ENCODE measurements at regions of chr16 and their contacts with region 1.

Region 1: GRCh38 chr16:57648590-57649442 is 19.3 kb upstream of the ADGRG3 start:
- DNase-seq: peak; percentile 75 to 88 (median 79)
- H3K4me3 ChIP-seq: no peak overlapping the region
- H3K4me3 Mint-ChIP-seq: peak overlapping the region; percentile 41 to 88 (median 75)
- H3K27ac ChIP-seq: no peak overlapping the region
- H3K27ac Mint-ChIP-seq: peak overlapping the region; percentile 63 to 96 (median 83)
- H3K4me1 ChIP-seq: peaks cover 34% of the 10 kb centered on the region
- H3K4me1 Mint-ChIP-seq: peaks cover 45 to 54% (median 46%) of the 10 kb centered on the region in 3 donors
- H3K27me3 ChIP-seq: no peaks in the 10 kb centered on the region
- H3K27me3 Mint-ChIP-seq: peaks cover 0 to 2% of the 10 kb centered on the region in 2 donors

Region 2: GRCh38 chr16:57555831-57556230 is 93.0 kb before region 1 on chr16:
- CTCF ChIA-PET with region 1: no interaction called
- POLR2A ChIA-PET with region 1: no interaction called
- DNase-seq: no peak
- H3K4me3 ChIP-seq: no peak overlapping the region
- H3K4me3 Mint-ChIP-seq: peak overlapping the region in 1 of 7 donors; percentile 1
- H3K27ac ChIP-seq: no peak overlapping the region
- H3K27ac Mint-ChIP-seq: peak overlapping the region in 2 of 8 donors; percentile 33 to 39
- H3K4me1 ChIP-seq: no peaks in the 10 kb centered on the region
- H3K4me1 Mint-ChIP-seq: peaks cover 40 to 55% (median 54%) of the 10 kb centered on the region in 3 donors
- H3K27me3 ChIP-seq: no peaks in the 10 kb centered on the region
- H3K27me3 Mint-ChIP-seq: peaks cover 0 to 2% of the 10 kb centered on the region in 2 donors

Region 3: GRCh38 chr16:57591086-57591869 is 57.5 kb before region 1 on chr16:
- CTCF ChIA-PET with region 1: interaction called, 99 read pairs
- POLR2A ChIA-PET with region 1: interaction called, 3 read pairs
- DNase-seq: peak in 4 of 5 donors; percentile 50 to 80 (median 53)
- H3K4me3 ChIP-seq: no peak overlapping the region
- H3K4me3 Mint-ChIP-seq: peak overlapping the region in 6 of 7 donors; percentile 73 to 87 (median 79)
- H3K27ac ChIP-seq: no peak overlapping the region
- H3K27ac Mint-ChIP-seq: peak overlapping the region; percentile 75 to 97 (median 94)
- H3K4me1 ChIP-seq: peaks cover 37% of the 10 kb centered on the region
- H3K4me1 Mint-ChIP-seq: peaks cover 62 to 74% (median 69%) of the 10 kb centered on the region in 3 donors
- H3K27me3 ChIP-seq: no peaks in the 10 kb centered on the region
- H3K27me3 Mint-ChIP-seq: no peaks in the 10 kb centered on the region

Region 4: GRCh38 chr16:57600048-57600835 is 48.6 kb before region 1 on chr16:
- CTCF ChIA-PET with region 1: interaction called, 42 read pairs
- POLR2A ChIA-PET with region 1: interaction called, 4 read pairs
- DNase-seq: no peak
- H3K4me3 ChIP-seq: no peak overlapping the region
- H3K4me3 Mint-ChIP-seq: peak overlapping the region in 6 of 7 donors; percentile 29 to 80 (median 35)
- H3K27ac ChIP-seq: no peak overlapping the region
- H3K27ac Mint-ChIP-seq: peak overlapping the region; percentile 52 to 95 (median 90)
- H3K4me1 ChIP-seq: peaks cover 45% of the 10 kb centered on the region
- H3K4me1 Mint-ChIP-seq: peaks cover 67 to 80% (median 67%) of the 10 kb centered on the region in 3 donors
- H3K27me3 ChIP-seq: no peaks in the 10 kb centered on the region
- H3K27me3 Mint-ChIP-seq: no peaks in the 10 kb centered on the region

Region 5: DNA sequence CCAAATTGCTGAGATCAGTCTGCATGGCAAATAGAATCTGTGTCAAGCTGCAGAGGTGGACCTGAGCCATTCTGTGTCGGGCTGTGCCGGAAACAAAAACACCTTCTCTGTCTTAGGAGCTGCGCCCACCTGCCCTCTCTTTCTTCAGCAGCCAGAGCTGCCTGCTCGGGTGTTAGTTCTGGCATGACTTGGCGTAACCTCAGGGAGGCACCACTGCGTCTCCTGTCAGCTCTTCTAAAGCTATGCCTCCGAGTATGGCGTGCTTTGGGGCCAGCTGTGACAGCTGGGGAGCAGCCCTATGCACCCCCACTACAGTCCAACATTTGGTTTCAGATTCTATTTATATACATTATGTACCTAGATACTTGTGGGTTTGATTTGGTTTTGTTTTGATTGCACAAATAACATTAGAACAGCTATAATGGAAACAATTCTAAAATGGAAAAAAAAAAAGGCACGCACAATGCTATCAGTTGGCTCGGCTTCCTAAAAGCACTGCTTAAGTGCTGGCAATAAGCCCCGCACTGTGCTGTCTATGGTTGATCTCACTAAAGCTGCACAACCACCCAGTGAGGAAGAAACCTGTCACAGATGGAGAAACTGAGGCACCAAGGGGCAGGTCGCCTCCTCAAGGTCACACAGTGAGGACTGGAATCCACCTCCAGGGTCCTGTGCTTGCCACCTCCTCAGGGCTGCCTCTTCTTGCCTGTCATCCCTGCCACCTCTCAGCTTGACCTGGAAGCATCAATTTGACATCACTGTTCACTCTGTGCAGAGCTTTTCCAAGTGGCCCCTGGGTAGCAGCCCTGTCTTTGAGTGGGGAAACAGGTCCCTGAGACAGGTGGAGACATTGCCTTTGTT is 39.0 kb before region 1 on chr16:
- CTCF ChIA-PET with region 1: interaction called, 57 read pairs
- POLR2A ChIA-PET with region 1: interaction called, 4 read pairs
- DNase-seq: peak; percentile 37 to 84 (median 44)
- H3K4me3 ChIP-seq: peak overlapping the region; percentile 44
- H3K4me3 Mint-ChIP-seq: peak overlapping the region; percentile 31 to 87 (median 82)
- H3K27ac ChIP-seq: peak overlapping the region; percentile 57
- H3K27ac Mint-ChIP-seq: peak overlapping the region; percentile 90 to 98 (median 95)
- H3K4me1 ChIP-seq: peaks cover 33% of the 10 kb centered on the region
- H3K4me1 Mint-ChIP-seq: peaks cover 67 to 88% (median 69%) of the 10 kb centered on the region in 3 donors
- H3K27me3 ChIP-seq: no peaks in the 10 kb centered on the region
- H3K27me3 Mint-ChIP-seq: no peaks in the 10 kb centered on the region

Region 6: GRCh38 chr16:57628008-57628781 is 20.6 kb before region 1 on chr16 and contains the start of gene ADGRG1:
- CTCF ChIA-PET with region 1: interaction called, 62 read pairs
- POLR2A ChIA-PET with region 1: no interaction called
- DNase-seq: peak in 2 of 5 donors; percentile 22 to 64
- H3K4me3 ChIP-seq: peak within 1 kb of the TSS; percentile 13
- H3K4me3 Mint-ChIP-seq: peak within 1 kb of the TSS; percentile 43 to 73 (median 68)
- H3K27ac ChIP-seq: peak within 1 kb of the TSS; percentile 20
- H3K27ac Mint-ChIP-seq: peak within 1 kb of the TSS in 5 of 8 donors; percentile 12 to 95 (median 69)
- H3K4me1 ChIP-seq: peaks cover 4% of the 10 kb centered on the region
- H3K4me1 Mint-ChIP-seq: peaks cover 7 to 32% (median 22%) of the 10 kb centered on the region in 3 donors
- H3K27me3 ChIP-seq: peaks cover 4% of the 10 kb centered on the region
- H3K27me3 Mint-ChIP-seq: peaks cover 1 to 11% of the 10 kb centered on the region in 2 donors
- total RNA-seq, gene ADGRG1: 25.8 to 29.8 TPM

Region 7: GRCh38 chr16:57734925-57735754 is 86.3 kb after region 1 on chr16:
- CTCF ChIA-PET with region 1: interaction called, 17 read pairs
- POLR2A ChIA-PET with region 1: no interaction called
- DNase-seq: peak; percentile 96 to 99 (median 99)
- H3K4me3 ChIP-seq: peak overlapping the region; percentile 90
- H3K4me3 Mint-ChIP-seq: peak overlapping the region; percentile 91 to 100 (median 96)
- H3K27ac ChIP-seq: peak overlapping the region; percentile 87
- H3K27ac Mint-ChIP-seq: peak overlapping the region; percentile 79 to 100 (median 96)
- H3K4me1 ChIP-seq: peaks cover 25% of the 10 kb centered on the region
- H3K4me1 Mint-ChIP-seq: peaks cover 30 to 44% (median 38%) of the 10 kb centered on the region in 3 donors
- H3K27me3 ChIP-seq: no peaks in the 10 kb centered on the region
- H3K27me3 Mint-ChIP-seq: peaks cover 0 to 5% of the 10 kb centered on the region in 2 donors

Region 8: GRCh38 chr16:57781741-57782606 is 133.2 kb after region 1 on chr16:
- CTCF ChIA-PET with region 1: no interaction called
- POLR2A ChIA-PET with region 1: no interaction called
- DNase-seq: no peak
- H3K4me3 ChIP-seq: no peak overlapping the region
- H3K4me3 Mint-ChIP-seq: no peak overlapping the region
- H3K27ac ChIP-seq: no peak overlapping the region
- H3K27ac Mint-ChIP-seq: peak overlapping the region in 1 of 8 donors; percentile 29
- H3K4me1 ChIP-seq: no peaks in the 10 kb centered on the region
- H3K4me1 Mint-ChIP-seq: no peaks in the 10 kb centered on the region
- H3K27me3 ChIP-seq: no peaks in the 10 kb centered on the region
- H3K27me3 Mint-ChIP-seq: peaks cover 0 to 3% of the 10 kb centered on the region in 2 donors